ENCODE measurements at regions of chr6 and their contacts with region 1.

Region 1: DNA sequence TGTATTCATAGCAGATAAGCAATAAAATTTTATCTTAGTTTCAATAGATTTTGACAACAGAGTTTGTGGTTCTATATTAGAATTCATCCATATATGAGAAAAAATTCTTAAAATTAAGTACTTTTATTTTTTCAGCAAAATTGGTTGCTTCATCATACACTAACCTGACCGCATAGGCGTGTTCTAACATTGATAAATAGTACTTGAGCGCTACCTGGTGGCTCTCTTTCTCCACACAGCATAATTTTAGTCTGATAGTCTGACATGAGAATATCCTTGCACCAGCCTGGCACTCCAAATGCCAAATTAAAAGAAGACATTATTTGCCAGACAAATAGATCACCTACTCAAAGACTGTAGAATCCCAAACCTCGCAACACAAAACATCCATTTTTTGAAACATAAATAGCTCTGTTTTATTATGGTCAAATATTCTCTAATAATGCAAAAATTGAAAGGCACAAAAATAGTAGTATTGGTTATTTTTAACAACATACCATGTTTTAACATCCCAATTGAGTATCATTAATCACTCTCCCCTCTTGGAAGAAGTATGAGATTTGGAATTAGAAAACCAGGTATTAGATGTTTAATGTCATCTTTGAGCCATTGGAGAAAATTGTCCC is 33.0 kb upstream of the FILIP1 start:
- DNase-seq: no peak
- ATAC-seq: peak; percentile 47
- H3K4me3 Mint-ChIP-seq: no peak overlapping the region
- H3K27ac Mint-ChIP-seq: no peak overlapping the region
- H3K4me1 Mint-ChIP-seq: no peaks in the 10 kb centered on the region
- H3K27me3 Mint-ChIP-seq: peaks cover 20% of the 10 kb centered on the region
- CTCF ChIP-seq: no peak

Region 2: GRCh38 chr6:73675466-73676098 is 1851.0 kb before region 1 on chr6:
- CTCF ChIA-PET with region 1: no interaction called
- POLR2A ChIA-PET with region 1: no interaction called
- intact Hi-C with region 1: loop called (anchors 10 kb)
- DNase-seq: peak; percentile 20
- ATAC-seq: peak; percentile 83
- H3K4me3 Mint-ChIP-seq: no peak overlapping the region
- H3K27ac Mint-ChIP-seq: no peak overlapping the region
- H3K4me1 Mint-ChIP-seq: no peaks in the 10 kb centered on the region
- H3K27me3 Mint-ChIP-seq: peaks cover 11% of the 10 kb centered on the region
- CTCF ChIP-seq: peak; percentile 83

Region 3: GRCh38 chr6:73739096-73739495 is 1787.5 kb before region 1 on chr6:
- CTCF ChIA-PET with region 1: no interaction called
- POLR2A ChIA-PET with region 1: no interaction called
- intact Hi-C with region 1: loop called (anchors 1 kb)
- DNase-seq: no peak
- ATAC-seq: peak; percentile 71
- H3K4me3 Mint-ChIP-seq: no peak overlapping the region
- H3K27ac Mint-ChIP-seq: no peak overlapping the region
- H3K4me1 Mint-ChIP-seq: no peaks in the 10 kb centered on the region
- H3K27me3 Mint-ChIP-seq: peaks cover 3% of the 10 kb centered on the region
- CTCF ChIP-seq: no peak

Region 4: DNA sequence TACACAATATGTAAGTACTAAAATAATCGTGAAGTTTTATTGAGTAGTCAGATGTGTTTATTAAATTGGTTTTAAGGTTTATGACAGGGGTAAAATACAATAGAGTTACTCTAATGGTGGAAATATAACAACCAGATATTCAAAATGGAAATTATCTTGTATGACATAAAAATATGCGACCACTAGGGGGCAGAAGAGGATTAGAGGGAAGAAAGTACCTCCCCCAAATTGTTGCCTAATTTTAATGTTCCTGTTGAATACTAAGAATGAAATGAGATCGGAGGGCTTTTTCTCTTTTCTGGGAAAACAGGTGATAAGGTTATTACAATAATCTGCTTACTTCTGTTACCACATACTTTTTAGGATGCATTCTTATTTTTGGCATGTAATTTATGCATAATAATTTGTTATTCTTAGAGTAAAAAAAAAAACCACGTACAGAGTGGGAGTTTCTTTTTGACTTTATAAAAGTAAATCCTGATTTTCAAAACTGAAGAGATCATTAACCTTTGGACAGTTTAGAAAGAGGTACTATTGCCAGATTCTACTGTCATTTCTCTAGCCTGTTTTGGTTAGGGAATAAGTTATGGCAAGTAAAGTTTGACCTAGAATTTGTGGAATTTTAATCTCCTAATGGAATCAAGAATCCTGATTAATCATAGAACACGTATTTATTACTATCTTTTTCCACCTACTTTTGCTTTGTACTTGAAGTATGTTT is 1671.5 kb before region 1 on chr6:
- CTCF ChIA-PET with region 1: no interaction called
- POLR2A ChIA-PET with region 1: no interaction called
- intact Hi-C with region 1: loop called (anchors 10 kb)
- DNase-seq: no peak
- ATAC-seq: no peak
- H3K4me3 Mint-ChIP-seq: no peak overlapping the region
- H3K27ac Mint-ChIP-seq: no peak overlapping the region
- H3K4me1 Mint-ChIP-seq: no peaks in the 10 kb centered on the region
- H3K27me3 Mint-ChIP-seq: no peaks in the 10 kb centered on the region
- CTCF ChIP-seq: peak; percentile 28

Region 5: GRCh38 chr6:75266716-75267291 is 259.8 kb before region 1 on chr6:
- CTCF ChIA-PET with region 1: interaction called, 5 read pairs
- POLR2A ChIA-PET with region 1: no interaction called
- intact Hi-C with region 1: loop called (anchors 1 kb)
- DNase-seq: no peak
- ATAC-seq: peak; percentile 77
- H3K4me3 Mint-ChIP-seq: no peak overlapping the region
- H3K27ac Mint-ChIP-seq: no peak overlapping the region
- H3K4me1 Mint-ChIP-seq: peaks cover 11% of the 10 kb centered on the region
- H3K27me3 Mint-ChIP-seq: no peaks in the 10 kb centered on the region
- CTCF ChIP-seq: peak; percentile 98

Region 6: DNA sequence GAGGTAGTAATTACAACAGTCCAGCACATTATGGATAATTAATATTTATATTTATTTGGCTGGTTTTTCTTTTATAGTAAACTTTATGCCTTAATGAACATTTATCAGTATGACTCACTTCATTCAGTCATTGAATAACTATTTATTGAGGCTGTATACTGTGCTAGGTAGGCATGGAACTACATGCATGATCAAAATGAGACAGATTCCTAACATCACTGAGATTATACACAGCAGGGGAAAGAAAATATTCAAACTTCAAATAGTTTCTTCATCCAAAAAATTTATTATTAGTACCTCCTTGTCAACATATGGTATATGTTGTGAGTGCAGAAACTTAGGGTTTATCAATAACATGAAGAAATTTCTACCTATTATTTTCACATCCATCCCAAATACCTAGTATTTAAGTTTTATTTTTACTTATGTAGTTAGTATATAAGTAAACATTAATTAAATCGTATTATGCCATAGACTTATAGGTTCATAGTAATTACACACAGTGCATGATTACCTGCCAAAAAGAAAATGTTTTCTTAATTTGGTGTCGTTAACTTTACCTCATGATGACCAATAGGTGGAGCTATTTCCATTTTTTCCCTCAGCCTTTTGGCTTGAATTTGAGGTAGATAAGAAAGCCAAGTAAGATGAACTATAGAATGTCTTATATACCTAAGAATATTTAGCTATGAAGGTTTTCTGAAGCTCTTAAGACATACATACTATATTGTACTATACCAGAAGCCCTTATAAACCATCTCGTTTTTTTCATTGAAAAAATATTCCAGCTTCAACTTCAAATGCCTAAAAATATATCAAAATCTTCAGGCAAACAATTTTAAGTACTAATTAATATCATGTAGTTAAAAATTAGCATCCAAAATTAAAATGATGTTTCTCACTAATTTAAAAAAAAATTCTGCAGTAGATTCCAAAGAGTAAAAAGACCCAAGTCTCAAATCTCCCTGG is 229.5 kb before region 1 on chr6:
- CTCF ChIA-PET with region 1: interaction called, 7 read pairs
- POLR2A ChIA-PET with region 1: no interaction called
- intact Hi-C with region 1: loop called (anchors 1 kb)
- DNase-seq: no peak
- ATAC-seq: peak; percentile 45
- H3K4me3 Mint-ChIP-seq: no peak overlapping the region
- H3K27ac Mint-ChIP-seq: no peak overlapping the region
- H3K4me1 Mint-ChIP-seq: no peaks in the 10 kb centered on the region
- H3K27me3 Mint-ChIP-seq: no peaks in the 10 kb centered on the region
- CTCF ChIP-seq: peak; percentile 66

Measured in activated B cell treated with CpG ODN at 0.5 μM for 24 hours (primary cell).